ENCODE measurements at regions of chr11 and their contacts with region 1.

Region 1: GRCh38 chr11:78112582-78113275 is 26.7 kb downstream of the ALG8 start:
- DNase-seq: no peak
- H3K4me3 ChIP-seq: no peak overlapping the region
- H3K27ac ChIP-seq: no peak overlapping the region
- H3K4me1 ChIP-seq: no peaks in the 10 kb centered on the region
- H3K27me3 ChIP-seq: no peaks in the 10 kb centered on the region
- CTCF ChIP-seq: no peak
- EP300 ChIP-seq: no peak
- POLR2A ChIP-seq: no peak

Region 2: GRCh38 chr11:78094250-78094649 is 18.5 kb before region 1 on chr11:
- intact Hi-C with region 1: loop called in 1 of 4 experiments (anchors 1 kb)
- DNase-seq: no peak
- H3K4me3 ChIP-seq: no peak overlapping the region
- H3K27ac ChIP-seq: no peak overlapping the region
- H3K4me1 ChIP-seq: no peaks in the 10 kb centered on the region
- H3K27me3 ChIP-seq: no peaks in the 10 kb centered on the region
- CTCF ChIP-seq: no peak
- EP300 ChIP-seq: no peak
- POLR2A ChIP-seq: no peak

Measured in ovary (tissue), 10 donors.